PC-3 (cell line): ENCODE measurements at regions of chr1 and their contacts with region 1.

Region 1: DNA sequence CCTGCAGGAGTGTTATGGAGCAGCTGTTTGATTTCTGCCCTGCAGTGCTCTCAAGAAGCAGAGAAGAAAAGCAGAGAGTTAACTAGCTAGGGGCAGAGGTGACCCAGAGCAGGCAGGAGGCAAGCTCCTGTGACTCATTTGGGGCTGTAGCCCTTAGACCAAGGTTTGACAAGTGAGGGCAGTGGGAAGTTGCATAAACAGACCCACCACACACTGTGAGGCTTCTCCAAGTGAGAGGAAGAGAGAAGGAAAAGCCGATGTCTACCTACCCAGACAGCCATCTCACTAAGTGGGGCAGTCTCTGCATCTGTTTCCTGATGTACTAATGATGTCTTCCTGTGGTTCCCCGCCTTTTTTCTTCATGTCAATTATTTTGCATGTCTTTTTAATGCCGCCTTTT is 159.9 kb upstream of the NR5A2 start:
- DNase-seq: no peak
- ATAC-seq: peak; percentile 59
- H3K4me3 ChIP-seq: no peak overlapping the region
- H3K27ac ChIP-seq: no peak overlapping the region
- H3K4me1 ChIP-seq: no peaks in the 10 kb centered on the region
- H3K27me3 ChIP-seq: peaks cover 19% of the 10 kb centered on the region; the same call in 1 of the 2 replicates
- CTCF ChIP-seq: no peak

Region 2: DNA sequence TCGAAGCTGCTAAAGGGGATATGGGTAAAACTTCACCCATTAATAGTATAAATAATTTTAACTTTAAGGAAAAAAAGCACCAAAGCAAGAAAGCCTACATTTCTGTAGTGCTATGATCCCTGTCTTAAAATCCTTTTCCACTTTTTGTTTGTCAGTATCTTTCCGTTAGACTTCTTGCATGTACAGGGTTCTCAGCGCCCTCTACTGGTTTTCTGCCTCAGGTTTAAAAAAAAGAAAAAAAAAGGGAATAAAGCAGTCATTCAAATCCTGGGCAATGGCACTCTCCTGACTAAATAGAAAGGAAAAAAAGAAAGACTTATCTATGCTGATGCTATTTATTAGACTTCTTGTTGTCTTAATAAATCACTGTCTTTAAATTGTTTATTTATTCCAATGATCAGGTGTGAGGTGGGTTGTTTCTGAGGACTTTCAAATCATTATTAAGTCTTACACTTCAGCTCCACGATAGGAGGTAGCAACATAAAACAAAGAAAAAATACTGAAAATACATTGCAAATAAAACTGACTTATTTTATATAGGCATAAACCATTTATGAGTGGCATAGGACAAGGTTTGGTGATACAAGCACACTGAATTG is 315.5 kb before region 1 on chr1:
- CTCF ChIA-PET with region 1: no interaction called
- POLR2A ChIA-PET with region 1: no interaction called
- intact Hi-C with region 1: no loop called
- DNase-seq: peak; percentile 73
- ATAC-seq: peak; percentile 22; the same call in 1 of the 2 replicates
- H3K4me3 ChIP-seq: no peak overlapping the region
- H3K27ac ChIP-seq: no peak overlapping the region
- H3K4me1 ChIP-seq: peaks cover 12% of the 10 kb centered on the region; the same call in 1 of the 2 replicates
- H3K27me3 ChIP-seq: no peaks in the 10 kb centered on the region
- CTCF ChIP-seq: peak; percentile 79

Region 3: DNA sequence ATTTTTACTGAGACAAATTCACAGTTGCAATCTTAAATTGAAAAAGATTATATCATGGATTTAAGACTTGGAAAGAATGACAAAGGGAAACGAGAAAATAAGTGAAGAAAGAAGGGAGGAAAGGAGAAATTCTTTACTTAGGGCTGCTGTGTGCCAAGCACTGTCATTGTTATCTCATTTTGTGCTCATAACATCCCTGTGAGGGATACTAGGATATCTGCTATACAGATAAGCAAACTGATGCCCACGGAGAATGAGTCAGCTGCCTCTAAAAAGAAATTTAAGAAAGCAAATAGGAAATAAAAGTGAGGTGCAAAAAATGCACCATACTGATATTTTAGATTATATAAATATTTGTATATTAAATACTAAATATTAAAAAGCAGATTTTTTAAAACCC is 23.7 kb before region 1 on chr1:
- CTCF ChIA-PET with region 1: no interaction called
- POLR2A ChIA-PET with region 1: no interaction called
- intact Hi-C with region 1: no loop called
- DNase-seq: no peak
- ATAC-seq: no peak; the same call in 1 of the 2 replicates
- H3K4me3 ChIP-seq: no peak overlapping the region
- H3K27ac ChIP-seq: no peak overlapping the region
- H3K4me1 ChIP-seq: no peaks in the 10 kb centered on the region
- H3K27me3 ChIP-seq: peaks cover 22% of the 10 kb centered on the region
- CTCF ChIP-seq: no peak

Region 4: DNA sequence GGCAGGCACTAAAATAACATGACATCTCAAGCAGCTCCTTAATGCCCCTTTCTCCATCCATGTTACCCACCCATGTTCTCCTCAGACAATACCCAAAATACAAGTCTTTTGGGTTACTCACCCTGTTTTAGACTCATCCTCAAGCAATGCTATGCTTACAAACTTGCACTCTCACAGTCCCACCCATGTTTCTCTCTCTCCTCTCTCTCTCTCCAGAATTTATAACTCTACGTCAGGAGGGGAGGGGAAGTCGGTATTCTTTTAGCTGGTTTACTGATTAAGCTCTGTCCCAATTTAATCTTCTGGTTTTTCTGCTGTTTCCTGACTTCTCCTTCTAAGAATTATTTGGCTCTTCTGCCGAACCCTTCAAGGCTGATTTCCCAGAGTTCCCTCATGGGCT is 62.0 kb after region 1 on chr1:
- CTCF ChIA-PET with region 1: no interaction called
- POLR2A ChIA-PET with region 1: no interaction called
- intact Hi-C with region 1: loop called (anchors 10 kb)
- DNase-seq: no peak
- ATAC-seq: no peak
- H3K4me3 ChIP-seq: no peak overlapping the region
- H3K27ac ChIP-seq: no peak overlapping the region
- H3K4me1 ChIP-seq: peaks cover 4% of the 10 kb centered on the region; the same call in 1 of the 2 replicates
- H3K27me3 ChIP-seq: 0 out of 2 replicates have a peak, but pooled peaks cover 5% of the 10 kb centered on the region
- CTCF ChIP-seq: no peak